ENCODE measurements at regions of chr10 and their contacts with region 1.

Region 1: GRCh38 chr10:98074315-98074911 is 44.0 kb upstream of the CRTAC1 start:
- DNase-seq: no peak

Region 2: GRCh38 chr10:97222326-97222961 is 852.0 kb before region 1 on chr10:
- intact Hi-C with region 1: no loop called
- DNase-seq: no peak

Region 3: GRCh38 chr10:98045785-98046389 is 28.5 kb before region 1 on chr10:
- intact Hi-C with region 1: no loop called
- DNase-seq: no peak

Region 4: GRCh38 chr10:98150544-98150943 is 76.1 kb after region 1 on chr10:
- intact Hi-C with region 1: loop called in 1 of 2 experiments (anchors 2 kb)
- DNase-seq: no peak

Measured in posterior vena cava (tissue), 2 donors.